ENCODE measurements at regions of chrX and their contacts with region 1.

Region 1: DNA sequence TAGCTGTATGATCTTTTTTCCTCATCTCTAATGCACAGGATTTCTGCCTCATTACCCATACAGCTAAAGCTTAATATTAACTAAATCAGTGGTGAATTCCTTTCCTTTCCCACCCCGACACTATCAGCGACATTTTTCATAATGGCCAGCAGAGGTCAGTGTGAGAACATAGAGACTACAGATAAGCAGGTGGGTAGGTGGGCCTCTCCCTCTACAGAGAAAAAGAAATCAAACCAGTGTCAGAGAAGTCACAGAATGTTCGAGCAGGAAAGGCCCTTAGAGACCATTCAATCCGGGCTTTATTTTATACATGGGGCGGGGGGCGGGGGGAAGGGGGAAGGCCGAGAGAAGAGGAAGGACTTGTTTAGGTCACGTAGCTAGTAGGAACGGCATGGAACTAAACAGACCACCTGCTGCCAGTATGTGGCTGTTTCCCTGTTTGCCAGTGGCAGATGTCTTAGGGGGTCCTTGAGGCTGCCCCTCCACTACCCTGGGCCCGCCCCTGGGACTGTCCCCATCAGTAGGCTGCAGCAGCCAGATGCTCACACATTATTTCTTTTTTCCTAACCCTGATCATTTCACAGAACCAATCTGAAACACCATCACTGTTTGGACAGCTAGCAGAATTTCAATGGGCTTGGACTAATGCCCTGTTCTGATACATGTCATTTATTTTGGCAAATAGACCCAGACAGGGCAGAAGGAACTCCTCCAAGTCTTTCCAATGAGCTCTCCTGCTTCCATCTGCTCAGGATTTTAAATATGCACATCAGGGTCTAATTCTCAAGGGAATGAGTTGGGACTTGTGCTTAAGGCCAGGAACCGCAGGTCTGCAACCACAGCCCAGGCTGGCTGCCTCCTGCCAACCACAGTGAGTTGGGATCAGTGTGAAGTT is 133.4 kb downstream of the ATG4A start:
- DNase-seq: no peak
- H3K4me3 Mint-ChIP-seq: no peak overlapping the region
- H3K27ac Mint-ChIP-seq: no peak overlapping the region
- H3K4me1 Mint-ChIP-seq: peaks cover 3% of the 10 kb centered on the region
- H3K27me3 Mint-ChIP-seq: no peaks in the 10 kb centered on the region

Region 2: DNA sequence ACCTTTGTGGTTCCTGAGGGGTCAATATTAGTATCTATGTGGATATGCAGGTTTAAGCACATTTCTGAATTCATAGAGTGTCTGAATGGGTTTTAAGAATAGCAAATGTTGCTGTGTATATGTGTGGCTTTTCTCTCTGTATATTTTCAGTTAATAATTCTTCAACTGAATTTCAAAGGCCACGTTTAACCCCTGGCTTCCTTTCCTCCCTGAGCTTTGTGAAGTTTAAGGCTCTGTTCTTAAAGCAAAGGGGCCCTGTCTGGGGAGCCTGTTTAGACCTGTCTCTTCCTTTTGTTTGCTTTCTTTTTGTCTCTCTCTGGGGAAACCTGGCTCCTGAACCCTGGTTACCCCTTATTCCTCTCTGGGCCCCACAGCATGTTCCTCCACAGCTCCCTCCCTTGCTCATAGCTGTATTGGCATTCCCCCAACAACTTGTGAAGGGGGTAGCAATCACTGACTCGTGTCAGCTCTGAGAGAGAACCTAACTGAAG is 74.2 kb after region 1 on chrX:
- CTCF ChIA-PET with region 1: interaction called, 5 read pairs
- intact Hi-C with region 1: loop called (anchors 5 kb)
- DNase-seq: no peak
- H3K4me3 Mint-ChIP-seq: no peak overlapping the region
- H3K27ac Mint-ChIP-seq: no peak overlapping the region
- H3K4me1 Mint-ChIP-seq: no peaks in the 10 kb centered on the region
- H3K27me3 Mint-ChIP-seq: no peaks in the 10 kb centered on the region

Region 3: DNA sequence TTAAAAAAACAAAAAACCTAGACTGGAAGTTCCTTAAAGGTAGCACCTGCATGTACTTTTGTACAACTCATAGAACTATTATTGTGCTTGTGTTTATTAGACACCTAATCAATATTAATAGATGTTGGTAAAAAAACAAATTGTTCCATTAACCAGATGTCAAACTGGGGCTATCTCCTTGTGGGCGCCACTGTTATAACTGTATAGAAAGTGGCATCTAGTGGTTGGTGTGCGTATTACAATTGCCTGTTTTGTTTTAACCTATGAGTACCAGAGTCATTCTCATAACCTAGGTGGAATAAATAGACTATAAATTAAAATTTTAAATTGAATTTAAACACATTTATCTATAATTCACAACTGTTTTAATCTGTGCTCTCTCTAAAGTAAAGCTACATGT is 312.0 kb after region 1 on chrX:
- CTCF ChIA-PET with region 1: interaction called, 4 read pairs
- intact Hi-C with region 1: loop called (anchors 1 kb)
- DNase-seq: peak; percentile 12
- H3K4me3 Mint-ChIP-seq: no peak overlapping the region
- H3K27ac Mint-ChIP-seq: no peak overlapping the region
- H3K4me1 Mint-ChIP-seq: no peaks in the 10 kb centered on the region
- H3K27me3 Mint-ChIP-seq: no peaks in the 10 kb centered on the region

Region 4: GRCh38 chrX:109384699-109385098 is 1159.7 kb after region 1 on chrX:
- CTCF ChIA-PET with region 1: no interaction called
- intact Hi-C with region 1: loop called (anchors 10 kb)
- DNase-seq: no peak
- H3K4me3 Mint-ChIP-seq: no peak overlapping the region
- H3K27ac Mint-ChIP-seq: no peak overlapping the region
- H3K4me1 Mint-ChIP-seq: no peaks in the 10 kb centered on the region
- H3K27me3 Mint-ChIP-seq: no peaks in the 10 kb centered on the region

Region 5: DNA sequence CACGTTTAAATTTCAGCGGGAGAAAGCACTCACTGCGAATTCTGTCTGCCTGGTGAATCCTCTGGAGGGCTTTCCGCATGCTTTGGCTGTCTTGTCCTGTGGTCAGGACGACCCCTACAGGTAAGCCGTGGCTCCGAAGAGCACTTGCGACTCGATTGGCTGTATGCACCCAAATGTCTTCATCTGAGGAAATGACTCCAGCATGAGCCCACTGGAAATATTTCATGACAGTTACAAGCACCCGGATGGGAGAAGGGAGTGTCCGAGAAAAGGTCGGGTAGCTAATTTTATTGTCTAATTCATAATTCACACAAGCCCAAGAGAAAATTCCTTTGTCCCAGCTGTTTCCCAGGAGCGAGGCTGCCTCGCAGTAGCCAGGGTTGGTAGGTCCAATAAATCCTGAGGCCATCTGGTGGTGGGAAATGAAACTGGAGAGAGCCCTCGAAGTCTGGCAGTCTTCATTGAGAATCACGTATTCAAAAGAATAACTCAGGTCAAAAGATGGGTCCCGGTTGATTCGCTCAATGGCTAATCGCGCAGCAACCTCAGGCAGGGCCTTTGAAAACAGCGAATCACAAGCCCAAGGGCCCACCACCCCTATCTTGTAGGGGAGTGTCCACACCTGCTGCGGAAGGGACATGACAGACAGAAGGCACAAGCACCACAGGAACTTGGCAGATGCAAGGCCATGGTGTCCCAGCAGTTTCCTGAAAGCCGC is 1250.4 kb after region 1 on chrX:
- CTCF ChIA-PET with region 1: no interaction called
- intact Hi-C with region 1: loop called (anchors 10 kb)
- DNase-seq: peak; percentile 34
- H3K4me3 Mint-ChIP-seq: no peak overlapping the region
- H3K27ac Mint-ChIP-seq: no peak overlapping the region
- H3K4me1 Mint-ChIP-seq: peaks cover 7% of the 10 kb centered on the region
- H3K27me3 Mint-ChIP-seq: no peaks in the 10 kb centered on the region